ENCODE measurements at regions of chr7 and their contacts with region 1.

Region 1: GRCh38 chr7:18345641-18346234 is 149.8 kb upstream of the HDAC9 start:
- DNase-seq: peak; percentile 43
- ATAC-seq: no peak; the same call in 1 of the 2 replicates
- H3K4me3 ChIP-seq: no peak overlapping the region
- H3K27ac ChIP-seq: no peak overlapping the region
- H3K4me1 ChIP-seq: no peaks in the 10 kb centered on the region
- H3K27me3 ChIP-seq: no peaks in the 10 kb centered on the region
- CTCF ChIP-seq: peak; percentile 86; the same call in 1 of the 2 replicates

Region 2: GRCh38 chr7:17680943-17681351 is 664.8 kb before region 1 on chr7:
- CTCF ChIA-PET with region 1: interaction called, 5 read pairs
- POLR2A ChIA-PET with region 1: no interaction called
- in situ Hi-C with region 1: no loop called
- intact Hi-C with region 1: loop called (anchors 5 kb)
- DNase-seq: peak; percentile 52
- ATAC-seq: 0 out of 2 replicates have a peak, but pooled peaks have one; percentile 27
- H3K4me3 ChIP-seq: no peak overlapping the region
- H3K27ac ChIP-seq: no peak overlapping the region; the same call in 1 of the 2 replicates
- H3K4me1 ChIP-seq: peaks cover 10% of the 10 kb centered on the region
- H3K27me3 ChIP-seq: no peaks in the 10 kb centered on the region; the same call in 1 of the 2 replicates
- CTCF ChIP-seq: peak; percentile 64

Region 3: DNA sequence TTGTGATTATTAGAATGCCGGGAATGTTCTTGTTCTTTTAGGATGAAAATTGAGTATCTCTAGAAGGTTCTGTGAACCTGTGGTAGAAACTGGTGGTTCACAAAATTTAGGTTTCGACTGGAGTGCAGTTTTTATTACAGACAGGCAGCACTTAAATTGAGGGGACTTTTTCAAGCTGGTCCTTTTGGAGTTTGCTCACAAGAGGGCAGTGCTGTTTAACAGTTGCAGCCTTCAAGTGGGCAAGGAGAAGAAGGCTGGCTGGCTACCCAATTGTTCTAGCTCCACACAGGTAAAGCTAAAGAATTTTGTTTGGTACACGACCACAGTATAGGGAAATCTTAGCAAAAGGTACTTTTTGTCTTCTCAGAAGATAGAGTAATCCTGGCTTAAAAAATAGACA is 639.0 kb before region 1 on chr7:
- CTCF ChIA-PET with region 1: interaction called, 8 read pairs
- POLR2A ChIA-PET with region 1: no interaction called
- in situ Hi-C with region 1: no loop called
- intact Hi-C with region 1: loop called (anchors 1 kb)
- DNase-seq: peak; percentile 77
- ATAC-seq: peak; percentile 95
- H3K4me3 ChIP-seq: no peak overlapping the region
- H3K27ac ChIP-seq: no peak overlapping the region
- H3K4me1 ChIP-seq: no peaks in the 10 kb centered on the region
- H3K27me3 ChIP-seq: peaks cover 4% of the 10 kb centered on the region; the same call in 1 of the 2 replicates
- CTCF ChIP-seq: peak; percentile 87

Region 4: GRCh38 chr7:17769918-17770317 is 575.8 kb before region 1 on chr7:
- CTCF ChIA-PET with region 1: interaction called, 12 read pairs
- POLR2A ChIA-PET with region 1: no interaction called
- in situ Hi-C with region 1: no loop called
- intact Hi-C with region 1: loop called (anchors 2 kb)
- DNase-seq: peak; percentile 56
- ATAC-seq: peak; percentile 90
- H3K4me3 ChIP-seq: no peak overlapping the region
- H3K27ac ChIP-seq: no peak overlapping the region
- H3K4me1 ChIP-seq: peaks cover 10% of the 10 kb centered on the region; the same call in 1 of the 2 replicates
- H3K27me3 ChIP-seq: no peaks in the 10 kb centered on the region; the same call in 1 of the 2 replicates
- CTCF ChIP-seq: peak; percentile 89

Region 5: DNA sequence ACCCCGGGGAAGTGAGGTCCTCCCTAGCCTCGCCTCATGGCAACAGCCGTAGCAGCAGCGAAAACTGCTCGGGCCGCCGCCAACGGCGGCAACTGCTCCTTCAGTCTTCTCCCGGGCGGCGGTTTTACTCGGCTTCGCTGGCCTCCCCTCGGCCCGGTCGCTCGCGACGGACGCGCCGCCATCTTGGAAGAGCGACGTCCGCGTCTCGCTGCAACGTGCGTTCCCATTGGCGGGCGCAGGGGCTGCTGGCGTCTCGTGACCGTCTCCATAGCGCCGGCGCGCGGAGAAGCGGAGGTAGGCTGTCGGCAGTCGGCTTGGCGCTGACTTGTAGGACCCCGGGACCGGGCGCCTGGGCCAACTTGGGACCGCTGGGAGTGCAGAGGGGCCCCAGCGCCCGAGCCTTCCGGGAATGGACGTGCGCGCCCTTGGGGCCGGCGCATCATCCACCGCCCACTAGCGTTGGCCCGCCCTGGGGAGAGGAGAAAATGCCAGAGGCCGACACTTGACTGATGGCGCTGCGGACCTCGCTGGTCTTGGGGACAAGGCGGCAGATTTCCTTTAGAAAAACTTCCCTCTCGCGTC is 405.3 kb before region 1 on chr7 and contains the start of gene SNX13:
- CTCF ChIA-PET with region 1: no interaction called
- POLR2A ChIA-PET with region 1: no interaction called
- in situ Hi-C with region 1: no loop called
- intact Hi-C with region 1: no loop called
- DNase-seq: peak; percentile 65
- ATAC-seq: peak; percentile 97
- H3K4me3 ChIP-seq: peak within 1 kb of the TSS; percentile 88 to 93
- H3K27ac ChIP-seq: peak within 1 kb of the TSS; percentile 93
- H3K4me1 ChIP-seq: peaks cover 16% of the 10 kb centered on the region
- H3K27me3 ChIP-seq: no peaks in the 10 kb centered on the region
- CTCF ChIP-seq: peak; percentile 71
- total RNA-seq, gene SNX13: 53.3 TPM

Region 6: GRCh38 chr7:17971411-17971810 is 374.3 kb before region 1 on chr7:
- CTCF ChIA-PET with region 1: no interaction called
- POLR2A ChIA-PET with region 1: no interaction called
- in situ Hi-C with region 1: no loop called
- intact Hi-C with region 1: loop called (anchors 10 kb)
- DNase-seq: no peak
- ATAC-seq: no peak
- H3K4me3 ChIP-seq: no peak overlapping the region
- H3K27ac ChIP-seq: no peak overlapping the region
- H3K4me1 ChIP-seq: no peaks in the 10 kb centered on the region
- H3K27me3 ChIP-seq: peaks cover 7% of the 10 kb centered on the region; the same call in 1 of the 2 replicates
- CTCF ChIP-seq: peak; percentile 50; the same call in 1 of the 2 replicates

Region 7: DNA sequence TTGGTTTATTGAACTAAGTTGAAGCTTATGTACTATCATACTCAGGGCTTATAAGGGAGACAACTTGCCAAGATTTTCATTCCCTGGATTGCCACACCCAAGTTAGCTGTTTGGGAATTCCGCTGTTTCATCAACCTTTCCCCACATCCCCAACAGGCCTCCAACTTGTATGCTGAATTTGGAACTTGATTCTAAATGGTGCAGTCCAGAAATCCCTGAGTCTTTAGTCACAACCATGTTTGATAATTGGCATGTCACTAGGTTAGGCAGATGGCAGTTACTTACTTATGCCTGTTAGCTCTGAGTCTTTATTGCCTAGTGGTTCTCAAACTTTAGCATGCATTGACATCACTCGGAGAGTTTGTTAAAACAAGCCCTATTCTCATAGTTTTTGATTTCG is 182.6 kb before region 1 on chr7:
- CTCF ChIA-PET with region 1: no interaction called
- POLR2A ChIA-PET with region 1: no interaction called
- in situ Hi-C with region 1: no loop called
- intact Hi-C with region 1: no loop called
- DNase-seq: no peak
- ATAC-seq: no peak
- H3K4me3 ChIP-seq: no peak overlapping the region
- H3K27ac ChIP-seq: no peak overlapping the region
- H3K4me1 ChIP-seq: no peaks in the 10 kb centered on the region
- H3K27me3 ChIP-seq: peaks cover 11% of the 10 kb centered on the region
- CTCF ChIP-seq: no peak

Measured in Panc1 (cell line).